ENCODE measurements at regions of chr17 and their contacts with region 1.

Region 1: DNA sequence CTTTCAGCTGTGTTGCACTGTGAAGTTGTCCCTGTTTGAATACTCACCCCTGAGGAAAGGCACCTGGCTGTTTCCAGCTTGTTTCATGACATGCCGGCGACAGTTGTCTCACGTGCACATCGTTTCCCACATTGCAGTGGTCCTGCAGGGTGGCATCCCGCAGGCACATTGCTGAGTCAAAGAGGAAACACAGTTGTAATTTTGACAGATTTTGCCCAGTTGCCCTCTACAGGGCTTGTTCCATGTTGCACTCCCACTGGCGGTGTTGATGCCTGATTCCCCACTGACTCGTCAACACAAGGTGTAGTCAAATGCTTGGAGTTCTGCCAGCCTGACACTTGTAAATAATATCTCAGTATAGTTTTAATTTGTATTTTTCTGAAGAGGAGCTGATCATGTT is 23.8 kb downstream of the EPN2 start:
- DNase-seq: no peak

Region 2: GRCh38 chr17:19247473-19247872 is 13.5 kb before region 1 on chr17:
- intact Hi-C with region 1: loop called (anchors 2 kb)
- DNase-seq: no peak